ENCODE measurements at regions of chr1 and their contacts with region 1.

Region 1: DNA sequence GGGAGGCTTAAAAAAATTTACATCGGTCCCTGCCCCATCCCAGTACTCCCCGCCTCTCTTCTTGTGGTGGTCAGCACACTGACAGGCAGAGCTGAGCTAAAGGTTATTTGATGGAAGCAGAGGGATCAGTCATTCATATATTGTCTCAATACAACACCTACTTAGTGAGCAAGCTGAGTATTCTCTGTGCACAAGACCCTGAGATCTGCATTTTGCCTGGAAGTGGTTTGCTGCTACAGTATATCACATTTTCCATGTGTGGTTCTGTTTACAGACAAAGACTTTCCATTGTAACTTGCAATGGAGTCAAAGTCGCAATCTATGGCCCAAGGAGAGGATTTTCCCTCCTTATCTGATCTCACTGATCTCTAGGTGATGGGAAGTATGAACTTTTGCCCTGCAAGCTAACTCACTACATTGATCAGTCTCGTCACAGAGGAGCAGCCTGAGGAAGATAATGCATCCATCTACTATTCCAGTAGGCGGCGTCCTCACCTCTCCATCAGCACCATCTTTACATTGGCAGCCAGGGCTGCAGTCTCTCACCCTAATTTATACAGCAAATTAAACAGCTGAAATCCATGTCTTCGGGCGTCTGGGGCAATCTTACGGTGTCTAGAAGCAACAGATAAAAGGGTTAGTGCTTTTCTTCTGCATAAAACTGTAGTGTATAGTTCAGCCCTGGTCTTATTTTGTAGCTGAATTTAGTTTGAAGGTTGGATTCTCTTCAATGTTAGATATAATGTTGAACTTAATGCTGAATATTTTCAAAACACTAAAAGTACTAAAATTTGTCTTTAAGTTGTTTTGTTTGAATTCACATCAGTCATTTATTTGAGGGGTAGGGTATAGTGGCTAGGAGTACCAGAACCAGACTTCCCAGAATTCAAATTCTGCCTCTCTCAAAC is 3.2 kb upstream of the TRAF5 start:
- DNase-seq: peak; percentile 56
- H3K4me3 Mint-ChIP-seq: no peak overlapping the region
- H3K27ac Mint-ChIP-seq: peak overlapping the region; percentile 81
- H3K4me1 Mint-ChIP-seq: peaks cover 72% of the 10 kb centered on the region
- H3K27me3 Mint-ChIP-seq: no peaks in the 10 kb centered on the region

Region 2: GRCh38 chr1:210448297-210448892 is 875.0 kb before region 1 on chr1:
- intact Hi-C with region 1: loop called (anchors 1 kb)
- DNase-seq: no peak
- H3K4me3 Mint-ChIP-seq: no peak overlapping the region
- H3K27ac Mint-ChIP-seq: no peak overlapping the region
- H3K4me1 Mint-ChIP-seq: peaks cover 21% of the 10 kb centered on the region
- H3K27me3 Mint-ChIP-seq: peaks cover 3% of the 10 kb centered on the region

Region 3: GRCh38 chr1:211281320-211282022 is 41.9 kb before region 1 on chr1:
- intact Hi-C with region 1: loop called (anchors 1 kb)
- DNase-seq: no peak
- H3K4me3 Mint-ChIP-seq: no peak overlapping the region
- H3K27ac Mint-ChIP-seq: no peak overlapping the region
- H3K4me1 Mint-ChIP-seq: no peaks in the 10 kb centered on the region
- H3K27me3 Mint-ChIP-seq: no peaks in the 10 kb centered on the region

Region 4: GRCh38 chr1:211335522-211336157 is 12.2 kb after region 1 on chr1:
- intact Hi-C with region 1: loop called (anchors 1 kb)
- DNase-seq: no peak
- H3K4me3 Mint-ChIP-seq: peak overlapping the region; percentile 65
- H3K27ac Mint-ChIP-seq: peak overlapping the region; percentile 87
- H3K4me1 Mint-ChIP-seq: peaks cover 82% of the 10 kb centered on the region
- H3K27me3 Mint-ChIP-seq: no peaks in the 10 kb centered on the region

Region 5: GRCh38 chr1:211345719-211346118 is 22.3 kb after region 1 on chr1:
- intact Hi-C with region 1: no loop called
- DNase-seq: no peak
- H3K4me3 Mint-ChIP-seq: no peak overlapping the region
- H3K27ac Mint-ChIP-seq: no peak overlapping the region
- H3K4me1 Mint-ChIP-seq: peaks cover 44% of the 10 kb centered on the region
- H3K27me3 Mint-ChIP-seq: no peaks in the 10 kb centered on the region

Region 6: GRCh38 chr1:211420389-211420788 is 97.0 kb after region 1 on chr1:
- intact Hi-C with region 1: loop called (anchors 1 kb)
- DNase-seq: peak; percentile 5
- H3K4me3 Mint-ChIP-seq: no peak overlapping the region
- H3K27ac Mint-ChIP-seq: peak overlapping the region; percentile 6
- H3K4me1 Mint-ChIP-seq: peaks cover 28% of the 10 kb centered on the region
- H3K27me3 Mint-ChIP-seq: peaks cover under 1% of the 10 kb centered on the region

Region 7: DNA sequence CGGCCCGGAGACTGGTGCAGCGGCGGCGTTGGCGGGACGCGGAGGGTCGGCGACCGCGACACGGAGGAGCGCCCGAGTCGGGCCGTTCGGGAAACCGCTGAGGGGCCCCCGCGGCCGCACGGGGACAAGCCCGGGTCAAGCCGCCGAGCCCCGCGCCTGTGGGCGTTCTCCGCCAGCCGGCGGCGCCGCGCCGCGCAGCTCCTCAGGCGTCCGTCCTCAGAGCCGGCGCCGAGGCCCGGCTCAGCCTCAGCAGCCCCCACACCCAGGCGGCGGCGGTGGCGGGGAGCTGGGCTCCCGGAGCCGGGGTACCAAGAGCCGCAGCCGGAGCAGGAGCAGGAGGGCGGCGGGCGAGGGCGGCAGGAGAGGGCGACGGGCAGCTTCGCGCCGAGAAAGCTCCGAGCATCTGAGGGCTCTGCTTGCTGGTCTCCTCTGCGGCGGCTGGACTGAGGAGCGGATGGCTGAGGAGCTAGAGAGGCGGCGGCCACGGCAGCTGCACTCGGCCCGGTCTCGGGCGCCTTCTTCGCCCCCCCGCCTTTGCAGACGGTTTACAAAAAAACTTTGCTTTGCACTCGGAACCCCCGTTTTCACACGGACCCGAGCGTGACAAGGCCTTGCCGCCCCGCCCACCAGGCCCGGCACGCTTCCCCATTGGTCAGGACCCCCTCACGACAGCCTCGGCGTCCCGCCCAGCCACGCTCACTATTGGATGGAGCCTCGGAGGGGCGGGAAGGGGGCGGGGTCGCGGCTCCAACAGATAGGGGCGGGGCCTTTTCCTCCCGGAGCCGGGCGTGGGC is 255.4 kb after region 1 on chr1 and contains the start of gene SLC30A1:
- intact Hi-C with region 1: loop called (anchors 1 kb)
- DNase-seq: peak; percentile 99
- H3K4me3 Mint-ChIP-seq: peak within 1 kb of the TSS; percentile 94
- H3K27ac Mint-ChIP-seq: peak within 1 kb of the TSS; percentile 88
- H3K4me1 Mint-ChIP-seq: peaks cover 42% of the 10 kb centered on the region
- H3K27me3 Mint-ChIP-seq: peaks cover under 1% of the 10 kb centered on the region
- total RNA-seq, gene SLC30A1: 10.6 and 12.0 TPM in 2 replicates

Region 8: DNA sequence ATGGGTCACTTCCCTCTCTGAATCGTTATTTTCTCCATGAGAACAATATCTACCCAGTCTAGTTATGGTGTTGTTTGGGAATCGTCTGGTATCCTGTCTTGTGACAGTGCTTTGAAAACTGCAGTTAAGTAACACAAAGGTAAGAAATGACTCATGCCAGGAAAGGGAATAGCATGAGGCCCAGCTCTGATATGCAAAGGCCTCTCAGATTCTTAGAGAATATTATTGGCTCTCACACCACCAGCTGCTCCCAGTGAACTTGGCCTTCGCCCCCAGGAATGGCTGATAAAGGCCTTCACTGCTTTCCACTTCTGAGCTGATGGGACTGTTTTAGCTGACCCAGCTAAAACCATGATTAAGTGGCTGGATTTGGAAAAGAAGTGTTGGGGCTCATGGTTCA is 324.9 kb after region 1 on chr1:
- intact Hi-C with region 1: no loop called
- DNase-seq: no peak
- H3K4me3 Mint-ChIP-seq: no peak overlapping the region
- H3K27ac Mint-ChIP-seq: no peak overlapping the region
- H3K4me1 Mint-ChIP-seq: no peaks in the 10 kb centered on the region
- H3K27me3 Mint-ChIP-seq: peaks cover 11% of the 10 kb centered on the region

Region 9: GRCh38 chr1:212035123-212035834 is 711.9 kb after region 1 on chr1 and contains the starts of genes DTL and INTS7:
- intact Hi-C with region 1: loop called (anchors 5 kb)
- DNase-seq: peak; percentile 99
- H3K4me3 Mint-ChIP-seq: peak within 1 kb of the TSS; percentile 95
- H3K27ac Mint-ChIP-seq: peak within 1 kb of the TSS; percentile 94
- H3K4me1 Mint-ChIP-seq: peaks cover 74% of the 10 kb centered on the region
- H3K27me3 Mint-ChIP-seq: peaks cover 3% of the 10 kb centered on the region
- total RNA-seq, gene DTL: 91.0 and 94.8 TPM in 2 replicates
- total RNA-seq, gene INTS7: 33.2 and 33.8 TPM in 2 replicates